Activated T-helper 2 cell treated with anti-CD3 and anti-CD28 coated beads, Interferon-gamma antibody, Interleukin-2, Interleukin-4, amounts not matched to agents 10 μg/mL and 5 μg/mL and 100 μg/mL, durations not matched to agents 14 hours and 24 hours and 36 hours (primary cell): ENCODE measurements at regions of chr3 and their contacts with region 1.

Region 1: DNA sequence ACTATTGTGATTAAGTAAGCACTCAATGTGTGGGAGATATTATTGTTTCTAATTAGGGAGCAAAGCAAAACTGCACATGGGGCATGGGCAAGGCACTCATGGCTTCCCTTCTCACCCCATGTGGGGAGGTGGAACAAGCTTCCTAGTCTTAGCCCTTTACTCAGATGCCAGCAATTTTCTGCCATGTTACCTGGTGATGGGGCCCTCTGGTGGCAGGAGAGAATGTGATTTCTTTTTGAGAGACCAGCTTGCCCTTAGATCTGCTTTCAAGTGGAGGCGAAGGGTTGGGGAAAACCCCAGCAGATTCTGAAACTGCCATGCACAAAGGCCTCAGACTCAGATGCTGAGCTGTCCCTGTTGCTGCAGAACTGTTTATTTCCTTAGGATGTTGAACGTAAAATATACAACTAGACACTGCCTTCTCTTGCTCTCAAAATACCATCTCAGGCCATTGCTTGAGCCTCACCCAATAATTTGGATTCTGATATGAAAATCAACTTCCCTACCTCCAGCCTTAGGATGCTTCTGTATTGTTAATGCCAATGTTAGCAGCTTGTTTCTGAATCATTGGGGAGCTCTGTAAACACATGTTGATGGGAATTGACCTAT is 130.2 kb upstream of the TPRG1 start:
- DNase-seq: peak; percentile 76
- H3K4me3 Mint-ChIP-seq: no peak overlapping the region
- H3K27ac Mint-ChIP-seq: peak overlapping the region; percentile 25
- H3K4me1 Mint-ChIP-seq: peaks cover 51% of the 10 kb centered on the region
- H3K27me3 Mint-ChIP-seq: no peaks in the 10 kb centered on the region

Region 2: DNA sequence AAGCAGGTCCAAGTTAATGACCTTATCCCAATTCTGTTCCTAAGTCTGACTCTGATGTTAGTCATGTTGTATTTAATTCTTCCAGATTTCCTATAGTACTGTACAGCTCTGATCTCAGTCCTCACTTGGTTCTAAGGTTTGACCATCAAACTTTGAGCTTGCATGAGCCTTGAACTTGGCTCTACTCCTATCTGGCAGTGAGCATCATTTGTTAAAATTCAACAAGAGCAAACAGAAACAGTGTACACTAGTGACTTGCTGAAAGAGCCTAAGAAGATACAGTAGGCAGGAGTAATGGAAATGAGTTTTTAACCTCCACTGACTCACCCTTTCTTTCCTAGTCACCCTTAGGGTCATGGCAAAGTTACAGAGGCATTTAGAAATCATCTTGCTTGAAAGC is 320.9 kb before region 1 on chr3:
- intact Hi-C with region 1: loop called (anchors 10 kb)
- DNase-seq: no peak
- H3K4me3 Mint-ChIP-seq: no peak overlapping the region
- H3K27ac Mint-ChIP-seq: no peak overlapping the region
- H3K4me1 Mint-ChIP-seq: peaks cover 27% of the 10 kb centered on the region
- H3K27me3 Mint-ChIP-seq: no peaks in the 10 kb centered on the region

Region 3: GRCh38 chr3:188796122-188796631 is 245.4 kb before region 1 on chr3:
- intact Hi-C with region 1: no loop called
- DNase-seq: no peak
- H3K4me3 Mint-ChIP-seq: no peak overlapping the region
- H3K27ac Mint-ChIP-seq: no peak overlapping the region
- H3K4me1 Mint-ChIP-seq: peaks cover 8% of the 10 kb centered on the region
- H3K27me3 Mint-ChIP-seq: no peaks in the 10 kb centered on the region

Region 4: GRCh38 chr3:189013224-189013888 is 28.2 kb before region 1 on chr3:
- intact Hi-C with region 1: loop called (anchors 1 kb)
- DNase-seq: no peak
- H3K4me3 Mint-ChIP-seq: no peak overlapping the region
- H3K27ac Mint-ChIP-seq: peak overlapping the region; percentile 42
- H3K4me1 Mint-ChIP-seq: peaks cover 21% of the 10 kb centered on the region
- H3K27me3 Mint-ChIP-seq: peaks cover 7% of the 10 kb centered on the region

Region 5: GRCh38 chr3:189148081-189148507 is 106.5 kb after region 1 on chr3:
- intact Hi-C with region 1: loop called (anchors 2 kb)
- DNase-seq: peak; percentile 52
- H3K4me3 Mint-ChIP-seq: no peak overlapping the region
- H3K27ac Mint-ChIP-seq: no peak overlapping the region
- H3K4me1 Mint-ChIP-seq: peaks cover 41% of the 10 kb centered on the region
- H3K27me3 Mint-ChIP-seq: peaks cover 7% of the 10 kb centered on the region

Region 6: DNA sequence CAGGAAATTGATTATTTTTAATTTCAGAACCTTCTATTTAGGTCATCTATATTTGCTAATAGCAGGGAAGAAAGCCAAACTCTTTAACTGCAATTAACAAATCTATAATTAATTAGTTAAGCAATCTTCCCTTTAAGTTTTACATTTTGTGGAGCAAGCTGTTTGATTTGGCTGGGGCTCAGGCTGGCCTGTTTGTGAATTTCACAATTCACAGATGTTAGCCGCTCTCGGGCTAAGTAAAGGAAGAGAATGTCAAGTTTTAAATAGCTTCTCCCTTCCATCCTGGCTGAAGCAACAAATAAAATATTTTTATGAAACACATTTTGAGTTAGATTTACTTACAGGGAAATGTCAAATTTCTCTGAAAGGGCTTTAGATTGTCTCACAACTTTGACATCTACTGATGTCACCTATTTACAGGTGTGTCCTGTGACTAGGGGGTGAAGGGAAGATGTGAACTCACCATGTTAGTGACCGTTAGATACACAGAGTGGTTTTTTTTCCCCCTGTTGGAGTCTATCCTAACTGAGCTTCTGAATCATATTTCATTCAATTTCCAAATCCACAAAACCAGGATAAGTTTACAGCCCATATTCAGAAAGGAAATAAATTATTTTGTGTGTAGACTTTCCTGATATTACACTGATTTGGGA is 588.3 kb after region 1 on chr3:
- intact Hi-C with region 1: loop called (anchors 10 kb)
- DNase-seq: no peak
- H3K4me3 Mint-ChIP-seq: peak overlapping the region; percentile 41
- H3K27ac Mint-ChIP-seq: peak overlapping the region; percentile 50
- H3K4me1 Mint-ChIP-seq: peaks cover 47% of the 10 kb centered on the region
- H3K27me3 Mint-ChIP-seq: no peaks in the 10 kb centered on the region